Endothelial cell of umbilical vein (primary cell): ENCODE measurements at regions of chr11 and their contacts with region 1.

Region 1: GRCh38 chr11:6362873-6363678 is 27.2 kb upstream of the SMPD1 start:
- DNase-seq: peak; percentile 72
- H3K4me3 ChIP-seq: no peak overlapping the region
- H3K27ac ChIP-seq: no peak overlapping the region
- H3K4me1 ChIP-seq: no peaks in the 10 kb centered on the region
- H3K27me3 ChIP-seq: no peaks in the 10 kb centered on the region
- CTCF ChIP-seq: peak; percentile 88 to 97
- POLR2A ChIP-seq: no peak

Region 2: GRCh38 chr11:5922749-5923426 is 440.2 kb before region 1 on chr11:
- CTCF ChIA-PET with region 1: no interaction called
- POLR2A ChIA-PET with region 1: no interaction called
- dilution Hi-C with region 1: no loop called
- intact Hi-C with region 1: no loop called
- DNase-seq: no peak
- H3K4me3 ChIP-seq: no peak overlapping the region
- H3K27ac ChIP-seq: no peak overlapping the region
- H3K4me1 ChIP-seq: no peaks in the 10 kb centered on the region
- H3K27me3 ChIP-seq: no peaks in the 10 kb centered on the region
- CTCF ChIP-seq: no peak
- POLR2A ChIP-seq: no peak

Region 3: DNA sequence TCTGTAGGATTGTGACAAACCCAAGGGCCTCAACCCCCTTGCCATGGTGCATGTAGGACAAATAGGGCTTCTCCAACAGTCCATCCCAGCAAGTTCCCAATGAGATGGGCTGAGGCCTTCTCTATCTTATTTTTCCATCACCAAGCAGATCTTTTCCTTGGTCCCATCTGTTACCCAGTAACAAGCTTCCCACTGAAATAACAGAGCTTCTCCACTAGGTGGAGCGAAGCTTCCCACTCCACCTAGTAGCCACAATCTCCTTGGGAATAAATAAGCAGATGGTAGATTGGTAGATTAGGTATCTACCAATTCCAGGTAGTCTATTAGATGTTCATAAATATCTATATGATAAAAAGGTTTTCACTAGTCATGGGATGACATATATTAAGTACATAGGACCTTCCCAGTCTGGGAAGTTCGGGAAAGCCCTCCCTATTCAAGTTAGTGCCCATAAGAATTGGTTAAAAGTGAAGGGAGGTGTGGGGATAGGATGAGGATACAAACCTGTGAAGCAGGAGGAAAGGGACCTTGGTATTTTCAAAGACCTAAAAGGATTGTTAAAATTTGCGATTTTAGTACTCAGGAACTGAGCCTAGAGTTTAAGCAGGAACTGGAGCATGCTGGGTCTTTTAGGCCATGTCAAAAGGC is 370.3 kb before region 1 on chr11:
- CTCF ChIA-PET with region 1: interaction called, 90 read pairs
- POLR2A ChIA-PET with region 1: no interaction called
- dilution Hi-C with region 1: no loop called
- intact Hi-C with region 1: no loop called
- DNase-seq: peak; percentile 38
- H3K4me3 ChIP-seq: no peak overlapping the region
- H3K27ac ChIP-seq: no peak overlapping the region
- H3K4me1 ChIP-seq: no peaks in the 10 kb centered on the region
- H3K27me3 ChIP-seq: no peaks in the 10 kb centered on the region
- CTCF ChIP-seq: peak; percentile 49 to 50
- POLR2A ChIP-seq: no peak

Region 4: GRCh38 chr11:6251120-6251733 is 111.8 kb before region 1 on chr11:
- CTCF ChIA-PET with region 1: interaction called, 167 read pairs
- POLR2A ChIA-PET with region 1: no interaction called
- dilution Hi-C with region 1: no loop called
- intact Hi-C with region 1: loop called (anchors 1 kb)
- DNase-seq: peak; percentile 47
- H3K4me3 ChIP-seq: no peak overlapping the region
- H3K27ac ChIP-seq: no peak overlapping the region
- H3K4me1 ChIP-seq: peaks cover 5% of the 10 kb centered on the region
- H3K27me3 ChIP-seq: peaks cover 19 to 28% of the 10 kb centered on the region in 2 experiments
- CTCF ChIP-seq: peak; percentile 76 to 78
- POLR2A ChIP-seq: no peak

Region 5: GRCh38 chr11:6307876-6308275 is 55.2 kb before region 1 on chr11:
- CTCF ChIA-PET with region 1: interaction called, 24 read pairs
- POLR2A ChIA-PET with region 1: no interaction called
- dilution Hi-C with region 1: no loop called
- intact Hi-C with region 1: no loop called
- DNase-seq: no peak
- H3K4me3 ChIP-seq: no peak overlapping the region
- H3K27ac ChIP-seq: no peak overlapping the region
- H3K4me1 ChIP-seq: no peaks in the 10 kb centered on the region
- H3K27me3 ChIP-seq: peaks cover 13 to 33% of the 10 kb centered on the region in 2 experiments
- CTCF ChIP-seq: no peak
- POLR2A ChIP-seq: no peak

Region 6: DNA sequence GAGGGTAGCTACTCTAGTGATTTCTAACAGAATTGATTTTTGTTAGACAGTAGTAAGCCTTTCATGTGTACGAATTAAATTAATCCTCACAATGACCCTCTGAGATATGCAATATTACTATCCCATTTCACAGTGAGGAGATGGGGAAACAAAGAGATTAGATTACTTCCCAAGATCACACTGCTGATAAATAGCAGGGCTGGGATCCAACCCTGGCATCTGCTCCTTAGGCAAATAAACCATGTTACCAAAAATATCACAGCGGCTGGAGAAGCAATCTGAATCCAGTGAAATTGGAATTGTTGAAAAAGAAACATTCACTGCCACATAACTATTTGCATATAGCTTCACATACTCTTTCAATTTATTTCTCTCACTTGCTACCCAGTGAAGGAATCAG is 30.0 kb before region 1 on chr11:
- CTCF ChIA-PET with region 1: interaction called, 35 read pairs
- POLR2A ChIA-PET with region 1: no interaction called
- dilution Hi-C with region 1: no loop called
- intact Hi-C with region 1: no loop called
- DNase-seq: no peak
- H3K4me3 ChIP-seq: no peak overlapping the region
- H3K27ac ChIP-seq: no peak overlapping the region
- H3K4me1 ChIP-seq: peaks cover 5% of the 10 kb centered on the region
- H3K27me3 ChIP-seq: peaks cover 0 to 1% of the 10 kb centered on the region in 2 experiments
- CTCF ChIP-seq: no peak
- POLR2A ChIP-seq: no peak

Region 7: DNA sequence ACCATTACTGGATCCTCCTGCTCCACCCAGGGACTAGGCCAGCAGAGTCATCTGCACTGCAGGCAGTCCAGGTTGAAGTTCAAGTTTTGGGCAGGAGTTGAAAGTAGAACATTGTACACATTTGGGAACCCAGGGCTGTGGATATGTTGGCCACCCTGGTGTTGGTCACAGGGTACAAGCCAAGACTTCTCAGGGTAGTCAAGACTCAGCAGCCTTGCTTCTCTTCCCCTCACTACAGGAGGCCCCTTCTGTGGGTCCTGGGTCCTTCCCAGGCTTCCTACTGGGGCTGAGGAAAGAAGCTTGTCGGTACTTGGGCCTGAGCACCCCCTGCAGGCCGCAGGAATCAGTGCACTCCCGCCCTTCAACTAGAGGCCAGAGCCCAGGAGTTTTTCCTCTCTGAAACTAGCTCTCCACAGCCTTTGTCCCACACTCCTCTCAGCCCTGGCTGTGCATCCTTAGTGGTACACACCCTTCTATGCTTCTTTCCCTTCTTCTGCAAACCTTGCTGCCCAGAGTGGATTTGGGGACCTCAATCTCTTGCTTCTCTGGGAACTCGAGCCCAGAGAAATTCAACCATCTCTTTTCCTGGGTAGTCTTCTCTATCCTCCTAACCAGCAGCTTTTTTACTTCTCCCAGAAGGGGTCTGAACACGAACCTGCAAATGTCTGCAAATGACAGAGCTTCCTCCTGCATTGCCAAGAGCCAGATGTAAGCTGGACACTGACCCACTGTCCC is 80.4 kb after region 1 on chr11:
- CTCF ChIA-PET with region 1: interaction called, 17 read pairs
- POLR2A ChIA-PET with region 1: no interaction called
- dilution Hi-C with region 1: no loop called
- intact Hi-C with region 1: no loop called
- DNase-seq: peak; percentile 56
- H3K4me3 ChIP-seq: no peak overlapping the region
- H3K27ac ChIP-seq: no peak overlapping the region
- H3K4me1 ChIP-seq: no peaks in the 10 kb centered on the region
- H3K27me3 ChIP-seq: no peaks in the 10 kb centered on the region
- CTCF ChIP-seq: peak; percentile 78 to 93
- POLR2A ChIP-seq: no peak

Region 8: DNA sequence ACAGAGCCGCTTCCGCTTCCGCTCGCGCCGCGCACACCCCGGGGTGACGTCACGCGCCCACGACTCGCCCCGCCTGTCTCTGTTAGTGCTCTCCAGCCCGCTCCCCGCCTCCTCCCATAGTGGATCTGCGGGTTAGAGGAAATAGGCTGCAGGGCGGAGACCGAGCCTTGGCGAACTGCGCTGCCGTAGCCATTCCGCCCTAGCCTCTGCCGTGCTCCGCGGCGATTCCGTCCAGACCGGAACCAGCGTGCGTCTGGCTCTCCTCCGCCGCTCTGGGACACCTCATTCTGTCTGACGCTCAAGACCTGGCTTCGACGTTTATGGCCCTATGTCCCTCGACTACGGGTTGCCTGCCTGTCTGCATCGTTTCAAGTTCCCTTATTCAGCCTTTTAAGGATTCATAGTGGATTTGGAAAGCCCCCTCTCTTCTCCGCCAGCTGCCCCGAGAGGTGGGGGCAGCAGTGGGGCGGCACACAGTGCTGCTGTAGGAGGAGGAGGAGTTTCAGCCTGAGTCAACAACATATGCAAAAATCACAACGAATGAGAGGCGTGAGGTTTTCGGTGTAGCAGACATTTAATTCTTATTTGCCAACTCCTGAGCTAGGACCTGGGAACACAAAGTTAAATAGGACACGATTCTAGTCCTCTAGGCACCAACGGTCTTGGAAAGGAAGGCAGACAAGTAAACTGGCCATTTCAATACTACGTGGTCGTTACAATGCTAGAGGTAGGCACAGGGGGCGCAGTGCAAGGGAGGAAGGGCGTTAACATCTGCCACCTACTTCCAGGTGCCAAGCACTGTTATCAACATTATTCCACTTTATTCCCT is 249.4 kb after region 1 on chr11 and contains the start of gene TAF10:
- CTCF ChIA-PET with region 1: no interaction called
- POLR2A ChIA-PET with region 1: no interaction called
- dilution Hi-C with region 1: no loop called
- intact Hi-C with region 1: no loop called
- DNase-seq: peak; percentile 97
- H3K4me3 ChIP-seq: peak within 1 kb of the TSS; percentile 28 to 72 (median 71)
- H3K27ac ChIP-seq: peak within 1 kb of the TSS; percentile 89
- H3K4me1 ChIP-seq: peaks cover 57% of the 10 kb centered on the region
- H3K27me3 ChIP-seq: no peaks in the 10 kb centered on the region
- CTCF ChIP-seq: peak; percentile 41 to 49
- POLR2A ChIP-seq: peak; percentile 92
- total RNA-seq, gene TAF10: 86.2 and 105 TPM in 2 replicates